ENCODE measurements at regions of chr18 and their contacts with region 1.

Region 1: DNA sequence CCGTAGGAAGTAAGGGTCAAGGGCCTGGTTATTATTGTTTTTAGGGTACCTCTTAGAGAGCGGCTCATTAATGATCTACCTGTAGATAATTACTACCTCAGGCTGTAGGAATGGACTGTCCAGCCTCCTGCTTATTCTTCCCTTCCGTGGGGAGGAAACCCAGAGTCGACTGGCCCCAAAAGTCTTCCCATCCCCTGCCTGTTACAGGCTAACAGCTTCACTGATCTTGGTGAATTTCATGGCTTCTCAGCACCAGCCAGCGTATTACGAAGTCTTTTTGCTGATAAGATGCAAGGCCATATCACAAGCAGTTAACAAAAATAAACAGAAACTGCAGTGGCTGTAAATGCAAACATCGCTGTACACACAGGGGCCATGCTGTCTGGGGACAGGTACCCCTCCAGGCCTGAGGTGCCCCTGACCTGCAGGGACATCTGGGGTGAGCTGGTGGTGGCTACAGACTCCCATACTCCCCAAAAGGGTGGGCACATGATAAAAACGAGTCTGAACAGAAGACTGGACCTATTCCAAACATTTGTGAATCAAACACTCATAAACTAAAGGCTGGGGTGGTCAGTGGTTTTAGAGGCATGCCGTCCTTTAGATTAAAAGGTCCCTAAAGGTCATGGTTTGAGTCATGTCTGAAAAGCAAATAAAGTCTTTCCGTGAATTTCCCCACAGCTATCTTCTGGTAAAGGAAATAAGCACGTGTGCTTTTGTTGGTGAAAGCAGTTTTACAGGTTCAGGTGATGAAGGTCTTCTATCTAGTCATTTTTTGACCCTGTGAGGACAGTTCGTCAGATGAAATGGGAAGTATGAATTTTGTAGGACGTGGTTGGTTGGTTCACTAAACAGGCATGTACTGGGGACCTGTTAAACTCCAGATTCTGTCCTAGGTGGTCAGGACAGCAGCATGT is 36.7 kb downstream of the TTC39C start:
- DNase-seq: no peak
- ATAC-seq: peak; percentile 24
- H3K4me3 Mint-ChIP-seq: no peak overlapping the region
- H3K27ac Mint-ChIP-seq: peak overlapping the region; percentile 79
- H3K4me1 Mint-ChIP-seq: peaks cover 73% of the 10 kb centered on the region
- H3K27me3 Mint-ChIP-seq: no peaks in the 10 kb centered on the region

Region 2: DNA sequence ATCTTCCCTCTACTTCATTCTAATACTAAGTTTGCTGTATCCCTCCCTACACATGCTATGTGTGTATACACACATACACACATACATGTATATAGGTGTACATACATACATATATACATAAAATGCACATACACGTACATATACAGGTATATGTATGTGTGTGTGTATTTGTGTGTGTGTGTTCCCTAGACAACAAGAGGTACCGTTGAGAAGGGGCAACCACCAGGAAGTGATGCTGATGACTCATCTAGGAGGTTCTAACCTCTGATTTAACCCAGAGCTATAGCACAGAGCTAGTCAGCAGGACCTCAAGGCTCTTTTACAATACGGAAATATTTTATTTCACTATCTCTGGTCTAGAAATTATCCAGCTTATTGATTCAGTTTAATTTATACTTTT is 222.9 kb before region 1 on chr18:
- CTCF ChIA-PET with region 1: no interaction called
- POLR2A ChIA-PET with region 1: interaction called, 3 read pairs
- intact Hi-C with region 1: loop called in 1 of 2 experiments (anchors 2 kb)
- DNase-seq: peak; percentile 48
- ATAC-seq: peak; percentile 94
- H3K4me3 Mint-ChIP-seq: no peak overlapping the region
- H3K27ac Mint-ChIP-seq: no peak overlapping the region
- H3K4me1 Mint-ChIP-seq: peaks cover 46% of the 10 kb centered on the region
- H3K27me3 Mint-ChIP-seq: no peaks in the 10 kb centered on the region

Region 3: GRCh38 chr18:23844991-23845680 is 206.2 kb before region 1 on chr18:
- CTCF ChIA-PET with region 1: no interaction called
- POLR2A ChIA-PET with region 1: no interaction called
- intact Hi-C with region 1: no loop called
- DNase-seq: no peak
- ATAC-seq: no peak
- H3K4me3 Mint-ChIP-seq: no peak overlapping the region
- H3K27ac Mint-ChIP-seq: no peak overlapping the region
- H3K4me1 Mint-ChIP-seq: peaks cover 3% of the 10 kb centered on the region
- H3K27me3 Mint-ChIP-seq: no peaks in the 10 kb centered on the region

Region 4: GRCh38 chr18:23884681-23885375 is 166.5 kb before region 1 on chr18:
- CTCF ChIA-PET with region 1: interaction called, 3 read pairs
- POLR2A ChIA-PET with region 1: no interaction called
- intact Hi-C with region 1: loop called in 1 of 2 experiments (anchors 5 kb)
- DNase-seq: no peak
- ATAC-seq: no peak
- H3K4me3 Mint-ChIP-seq: no peak overlapping the region
- H3K27ac Mint-ChIP-seq: no peak overlapping the region
- H3K4me1 Mint-ChIP-seq: peaks cover 24% of the 10 kb centered on the region
- H3K27me3 Mint-ChIP-seq: no peaks in the 10 kb centered on the region

Region 5: DNA sequence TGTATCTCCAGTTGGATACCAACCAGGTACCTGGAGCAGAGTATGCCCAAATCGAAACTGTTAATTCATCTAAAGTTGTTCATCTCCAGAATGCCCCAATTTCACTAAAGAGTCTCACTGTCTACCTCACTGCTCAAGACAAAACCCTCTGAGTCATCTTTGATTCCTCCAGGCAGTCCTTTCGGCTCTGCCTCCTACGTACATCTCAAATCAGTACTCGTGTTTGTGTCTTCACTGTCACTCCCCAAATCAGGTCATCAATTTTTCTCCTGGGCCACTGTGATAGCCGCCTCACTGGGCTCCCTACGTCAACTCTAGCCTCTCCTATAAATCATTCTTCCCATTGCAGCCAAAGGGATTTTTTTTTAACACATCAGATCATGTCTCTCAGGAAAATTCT is 78.9 kb before region 1 on chr18:
- CTCF ChIA-PET with region 1: no interaction called
- POLR2A ChIA-PET with region 1: no interaction called
- intact Hi-C with region 1: loop called (anchors 2 to 5 kb)
- DNase-seq: peak; percentile 55
- ATAC-seq: peak; percentile 92
- H3K4me3 Mint-ChIP-seq: no peak overlapping the region
- H3K27ac Mint-ChIP-seq: no peak overlapping the region
- H3K4me1 Mint-ChIP-seq: peaks cover 52% of the 10 kb centered on the region
- H3K27me3 Mint-ChIP-seq: no peaks in the 10 kb centered on the region

Region 6: GRCh38 chr18:23992089-23992940 is 59.0 kb before region 1 on chr18:
- CTCF ChIA-PET with region 1: no interaction called
- POLR2A ChIA-PET with region 1: no interaction called
- intact Hi-C with region 1: loop called in 1 of 2 experiments (anchors 2 kb)
- DNase-seq: peak; percentile 57
- ATAC-seq: peak; percentile 95
- H3K4me3 Mint-ChIP-seq: no peak overlapping the region
- H3K27ac Mint-ChIP-seq: peak overlapping the region; percentile 60
- H3K4me1 Mint-ChIP-seq: peaks cover 51% of the 10 kb centered on the region
- H3K27me3 Mint-ChIP-seq: peaks cover 3% of the 10 kb centered on the region

Region 7: GRCh38 chr18:24019641-24020331 is 31.5 kb before region 1 on chr18:
- CTCF ChIA-PET with region 1: interaction called, 8 read pairs
- POLR2A ChIA-PET with region 1: interaction called, 3 read pairs
- intact Hi-C with region 1: loop called (anchors 1 kb)
- DNase-seq: peak; percentile 76
- ATAC-seq: peak; percentile 70
- H3K4me3 Mint-ChIP-seq: peak overlapping the region; percentile 55
- H3K27ac Mint-ChIP-seq: peak overlapping the region; percentile 96
- H3K4me1 Mint-ChIP-seq: peaks cover 85% of the 10 kb centered on the region
- H3K27me3 Mint-ChIP-seq: no peaks in the 10 kb centered on the region

Region 8: GRCh38 chr18:24027156-24027827 is 24.0 kb before region 1 on chr18:
- CTCF ChIA-PET with region 1: interaction called, 8 read pairs
- POLR2A ChIA-PET with region 1: interaction called, 3 read pairs
- intact Hi-C with region 1: loop called in 1 of 2 experiments (anchors 2 kb)
- DNase-seq: no peak
- ATAC-seq: no peak
- H3K4me3 Mint-ChIP-seq: no peak overlapping the region
- H3K27ac Mint-ChIP-seq: no peak overlapping the region
- H3K4me1 Mint-ChIP-seq: peaks cover 86% of the 10 kb centered on the region
- H3K27me3 Mint-ChIP-seq: no peaks in the 10 kb centered on the region